Heart left ventricle (tissue), 16 donors: ENCODE measurements at regions of chr12 and their contacts with region 1.

Region 1: GRCh38 chr12:116236148-116236731 is 41.3 kb downstream of the MED13L start:
- DNase-seq: peak in 4 of 5 donors; percentile 42 to 50 (median 46)
- ATAC-seq: peak; percentile 25 to 84 (median 64)
- H3K4me3 ChIP-seq: no peak overlapping the region
- H3K27ac ChIP-seq: peak overlapping the region in 3 of 12 donors; percentile 14 to 18 (median 15)
- H3K4me1 ChIP-seq: peaks cover 0 to 60% (median 37%) of the 10 kb centered on the region in 12 donors
- H3K27me3 ChIP-seq: no peaks in the 10 kb centered on the region
- CTCF ChIP-seq: peak; percentile 54 to 85 (median 74)
- POLR2A ChIP-seq: no peak

Region 2: GRCh38 chr12:115998119-115998633 is 238.1 kb before region 1 on chr12:
- intact Hi-C with region 1: loop called in 5 of 10 experiments (anchors 5 kb)
- DNase-seq: no peak
- ATAC-seq: peak in 2 of 4 donors; percentile 39 to 53
- H3K4me3 ChIP-seq: no peak overlapping the region
- H3K27ac ChIP-seq: peak overlapping the region in 2 of 12 donors; percentile 1 to 11
- H3K4me1 ChIP-seq: peaks cover 0 to 13% (median 3%) of the 10 kb centered on the region in 12 donors
- H3K27me3 ChIP-seq: no peaks in the 10 kb centered on the region
- CTCF ChIP-seq: peak; percentile 76 to 97 (median 86)
- POLR2A ChIP-seq: no peak

Region 3: GRCh38 chr12:116009805-116010204 is 226.4 kb before region 1 on chr12:
- intact Hi-C with region 1: loop called in 9 of 10 experiments (anchors 2 to 5 kb)
- DNase-seq: no peak
- ATAC-seq: no peak
- H3K4me3 ChIP-seq: no peak overlapping the region
- H3K27ac ChIP-seq: no peak overlapping the region
- H3K4me1 ChIP-seq: no peaks in the 10 kb centered on the region
- H3K27me3 ChIP-seq: no peaks in the 10 kb centered on the region
- CTCF ChIP-seq: peak in 6 of 12 donors; percentile 10 to 41 (median 18)
- POLR2A ChIP-seq: no peak

Region 4: GRCh38 chr12:116015525-116015924 is 220.7 kb before region 1 on chr12:
- intact Hi-C with region 1: loop called (anchors 2 to 5 kb)
- DNase-seq: no peak
- ATAC-seq: peak; percentile 62 to 86 (median 78)
- H3K4me3 ChIP-seq: no peak overlapping the region
- H3K27ac ChIP-seq: no peak overlapping the region
- H3K4me1 ChIP-seq: peaks cover 0 to 16% (median 10%) of the 10 kb centered on the region in 12 donors
- H3K27me3 ChIP-seq: no peaks in the 10 kb centered on the region
- CTCF ChIP-seq: peak; percentile 20 to 78 (median 58)
- POLR2A ChIP-seq: no peak

Region 5: DNA sequence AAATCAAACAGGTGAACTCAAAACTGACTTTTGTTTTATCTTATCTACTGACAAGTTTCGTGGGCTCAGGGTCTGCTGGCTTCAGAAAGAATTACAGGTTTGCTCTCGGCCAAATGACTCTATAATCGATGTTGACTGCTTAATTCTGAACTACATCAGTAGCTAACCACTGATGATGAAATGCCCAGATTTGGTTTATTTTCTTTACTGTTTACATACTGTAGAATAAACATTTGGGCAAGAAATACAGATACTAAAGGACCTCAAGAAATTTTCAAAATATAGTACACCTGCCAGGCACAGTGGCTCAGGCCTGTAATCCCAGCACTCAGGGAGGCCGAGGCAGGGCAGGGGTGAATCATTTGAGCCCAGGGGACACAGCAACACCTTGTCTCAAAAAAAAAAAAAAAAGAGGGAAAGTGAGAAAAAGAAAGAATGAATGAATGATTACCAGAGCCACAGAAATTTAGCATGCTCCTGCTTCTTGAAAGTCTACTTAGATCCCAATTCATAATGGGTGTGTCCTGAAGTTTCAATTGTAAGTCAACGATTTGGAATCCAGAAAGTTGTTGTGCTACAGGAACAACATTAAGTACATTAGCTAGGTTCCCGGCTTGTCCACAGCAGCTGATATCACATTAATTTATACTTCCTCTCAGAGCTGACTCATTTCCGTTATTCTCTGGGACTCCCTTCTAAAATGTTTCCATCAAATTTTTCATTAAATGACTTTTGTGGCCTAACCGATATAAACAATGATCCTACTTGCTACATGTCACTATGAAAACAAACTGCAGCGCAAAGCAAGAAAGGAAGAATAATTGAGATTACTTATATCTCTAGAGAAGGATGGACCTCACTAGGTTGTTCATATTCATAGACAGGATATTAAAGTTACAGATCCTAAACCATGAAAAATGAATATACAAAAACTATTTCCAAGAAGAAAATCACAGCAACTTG is 93.0 kb before region 1 on chr12:
- intact Hi-C with region 1: loop called in 7 of 10 experiments (anchors 5 to 10 kb)
- DNase-seq: no peak
- ATAC-seq: peak in 2 of 4 donors; percentile 27 to 29
- H3K4me3 ChIP-seq: no peak overlapping the region
- H3K27ac ChIP-seq: peak overlapping the region in 7 of 12 donors; percentile 1 to 60 (median 31)
- H3K4me1 ChIP-seq: peaks cover 4 to 79% (median 52%) of the 10 kb centered on the region in 12 donors
- H3K27me3 ChIP-seq: no peaks in the 10 kb centered on the region
- CTCF ChIP-seq: no peak
- POLR2A ChIP-seq: no peak

Region 6: GRCh38 chr12:117002051-117002817 is 766.0 kb after region 1 on chr12:
- intact Hi-C with region 1: no loop called
- DNase-seq: no peak
- ATAC-seq: peak in 3 of 4 donors; percentile 50 to 60 (median 57)
- H3K4me3 ChIP-seq: no peak overlapping the region
- H3K27ac ChIP-seq: peak overlapping the region in 6 of 12 donors; percentile 9 to 71 (median 33)
- H3K4me1 ChIP-seq: peaks cover 0 to 31% (median 6%) of the 10 kb centered on the region in 12 donors
- H3K27me3 ChIP-seq: no peaks in the 10 kb centered on the region
- CTCF ChIP-seq: no peak
- POLR2A ChIP-seq: no peak